Endothelial cell of umbilical vein (primary cell): ENCODE measurements at regions of chr1 and their contacts with region 1.

Region 1: GRCh38 chr1:94335950-94336349 is 82.2 kb upstream of the ABCD3 start:
- DNase-seq: peak; percentile 94
- H3K4me3 ChIP-seq: no peak overlapping the region
- H3K27ac ChIP-seq: no peak overlapping the region
- H3K4me1 ChIP-seq: peaks cover 5% of the 10 kb centered on the region
- H3K27me3 ChIP-seq: peaks cover 4 to 5% of the 10 kb centered on the region in 2 experiments
- CTCF ChIP-seq: peak; percentile 73 to 89
- POLR2A ChIP-seq: no peak

Region 2: DNA sequence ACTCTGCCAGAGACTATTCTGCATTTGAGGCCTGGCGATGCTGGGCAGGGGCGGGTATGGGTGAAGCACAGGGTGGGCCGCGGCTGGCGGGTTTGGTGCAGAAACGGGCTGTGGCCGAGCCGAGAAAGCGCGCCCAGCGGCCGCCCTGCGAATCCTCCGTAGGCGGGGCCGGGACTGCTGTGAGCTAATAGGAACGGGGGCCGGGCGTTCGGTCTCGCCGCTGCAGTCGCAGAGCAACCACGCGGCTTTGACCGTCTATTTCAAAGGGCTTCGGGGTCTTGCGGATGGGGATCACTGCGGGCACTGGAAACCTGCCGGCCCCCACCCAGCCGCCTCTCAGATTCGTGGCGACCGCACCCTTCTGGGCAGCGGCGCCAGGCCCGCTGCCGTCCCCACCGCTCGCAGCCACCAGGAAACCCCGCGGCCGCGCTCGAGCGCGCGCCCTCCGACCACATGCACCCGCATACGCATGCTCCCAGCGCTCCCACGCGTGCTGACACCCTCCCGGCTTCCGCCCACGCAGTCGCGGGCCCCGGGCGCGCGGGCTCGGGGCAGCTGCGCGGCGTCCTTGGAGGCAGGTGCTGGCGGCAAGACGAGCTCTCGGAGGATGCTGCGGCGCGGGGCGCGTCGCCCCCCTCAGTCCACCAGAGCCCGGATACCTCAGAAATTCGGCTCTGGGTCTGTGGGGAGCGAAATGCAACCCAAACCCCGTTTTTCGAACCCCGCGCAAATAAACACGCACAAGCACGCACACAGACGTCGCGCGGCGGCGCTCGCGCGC is 489.5 kb before region 1 on chr1:
- CTCF ChIA-PET with region 1: interaction called, 10 read pairs
- POLR2A ChIA-PET with region 1: no interaction called
- dilution Hi-C with region 1: no loop called
- intact Hi-C with region 1: loop called (anchors 5 kb)
- DNase-seq: peak; percentile 83
- H3K4me3 ChIP-seq: peak overlapping the region; percentile 65 to 90 (median 67)
- H3K27ac ChIP-seq: peak overlapping the region; percentile 99
- H3K4me1 ChIP-seq: peaks cover 25% of the 10 kb centered on the region
- H3K27me3 ChIP-seq: no peaks in the 10 kb centered on the region
- CTCF ChIP-seq: peak; percentile 27 to 53
- POLR2A ChIP-seq: peak; percentile 72

Region 3: GRCh38 chr1:94025383-94026340 is 310.3 kb before region 1 on chr1:
- CTCF ChIA-PET with region 1: interaction called, 1,439 read pairs
- POLR2A ChIA-PET with region 1: interaction called, 6 read pairs
- dilution Hi-C with region 1: no loop called
- intact Hi-C with region 1: loop called (anchors 1 kb)
- DNase-seq: peak; percentile 83
- H3K4me3 ChIP-seq: no peak overlapping the region
- H3K27ac ChIP-seq: no peak overlapping the region
- H3K4me1 ChIP-seq: peaks cover 25% of the 10 kb centered on the region
- H3K27me3 ChIP-seq: no peaks in the 10 kb centered on the region
- CTCF ChIP-seq: peak; percentile 53 to 73
- POLR2A ChIP-seq: no peak

Region 4: DNA sequence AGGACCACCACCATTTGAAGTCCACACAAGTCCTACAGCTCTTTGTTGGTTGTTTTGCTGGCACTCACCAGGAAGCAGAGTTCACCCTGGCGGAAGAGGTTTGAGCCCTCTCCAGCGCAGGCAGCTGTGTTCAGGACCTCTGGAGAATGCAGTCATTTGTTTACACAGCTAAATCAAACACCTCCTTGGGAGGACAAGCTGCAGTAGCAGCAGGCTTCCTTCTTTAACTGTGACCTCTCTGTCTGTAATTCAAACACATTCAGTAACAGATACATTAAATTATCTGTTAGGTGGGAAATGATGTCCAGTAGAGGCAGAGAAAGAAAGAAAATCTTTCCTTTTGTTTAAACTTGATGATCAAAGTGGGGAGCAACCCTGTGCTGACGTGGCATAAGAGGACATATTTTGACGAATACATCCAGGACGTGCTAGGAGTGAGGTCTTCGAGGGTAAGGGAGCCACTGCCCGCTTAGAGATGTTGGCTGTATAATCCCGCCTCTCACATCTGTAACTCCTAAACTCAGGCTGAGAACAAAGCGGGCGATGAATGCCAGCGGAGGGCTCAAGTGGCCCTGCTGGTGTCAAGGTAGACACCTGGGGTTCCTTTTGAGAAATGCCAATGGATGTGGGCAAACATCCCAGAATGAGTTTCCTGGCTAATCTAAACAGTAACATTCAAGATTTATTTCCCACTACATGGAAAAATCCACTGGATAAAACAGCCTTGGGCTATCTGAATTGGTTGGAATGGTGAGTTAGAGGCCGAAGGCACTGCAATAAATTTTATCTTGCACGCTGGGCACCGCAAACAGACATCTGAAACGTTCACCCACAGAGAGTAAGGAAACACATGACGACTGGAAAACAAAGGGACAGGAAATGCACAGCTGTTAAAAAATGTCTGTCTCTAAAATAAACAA is 266.7 kb before region 1 on chr1:
- CTCF ChIA-PET with region 1: interaction called, 252 read pairs
- POLR2A ChIA-PET with region 1: no interaction called
- dilution Hi-C with region 1: no loop called
- intact Hi-C with region 1: no loop called
- DNase-seq: peak; percentile 98
- H3K4me3 ChIP-seq: no peak overlapping the region
- H3K27ac ChIP-seq: peak overlapping the region; percentile 100
- H3K4me1 ChIP-seq: peaks cover 77% of the 10 kb centered on the region
- H3K27me3 ChIP-seq: no peaks in the 10 kb centered on the region
- CTCF ChIP-seq: no peak
- POLR2A ChIP-seq: no peak

Region 5: DNA sequence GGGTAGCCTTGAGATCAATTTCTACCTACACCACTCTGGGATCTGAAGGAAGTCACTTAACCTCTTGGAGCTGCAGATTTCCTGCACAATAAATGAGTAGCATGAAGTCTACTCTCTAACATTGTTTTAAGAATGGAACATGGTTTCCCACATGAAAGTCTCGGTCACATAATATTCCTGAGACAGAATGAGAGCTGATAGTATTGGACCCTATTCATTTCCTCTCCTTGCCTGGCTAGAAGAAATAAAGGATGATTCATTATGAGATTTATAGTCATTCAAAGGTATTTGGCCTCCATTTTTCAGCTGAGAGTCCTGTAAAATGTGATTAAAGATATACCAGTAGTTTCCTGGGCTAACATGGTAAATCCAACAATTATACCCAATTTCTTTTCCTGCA is 155.3 kb before region 1 on chr1:
- CTCF ChIA-PET with region 1: interaction called, 41 read pairs
- POLR2A ChIA-PET with region 1: interaction called, 3 read pairs
- dilution Hi-C with region 1: no loop called
- intact Hi-C with region 1: loop called (anchors 5 kb)
- DNase-seq: peak; percentile 49
- H3K4me3 ChIP-seq: no peak overlapping the region
- H3K27ac ChIP-seq: peak overlapping the region; percentile 18
- H3K4me1 ChIP-seq: peaks cover 36% of the 10 kb centered on the region
- H3K27me3 ChIP-seq: no peaks in the 10 kb centered on the region
- CTCF ChIP-seq: no peak
- POLR2A ChIP-seq: no peak

Region 6: GRCh38 chr1:94228640-94229375 is 107.1 kb before region 1 on chr1:
- CTCF ChIA-PET with region 1: interaction called, 91 read pairs
- POLR2A ChIA-PET with region 1: interaction called, 9 read pairs
- dilution Hi-C with region 1: no loop called
- intact Hi-C with region 1: no loop called
- DNase-seq: no peak
- H3K4me3 ChIP-seq: peak overlapping the region in 1 of 3 experiments; percentile 12
- H3K27ac ChIP-seq: no peak overlapping the region
- H3K4me1 ChIP-seq: peaks cover 71% of the 10 kb centered on the region
- H3K27me3 ChIP-seq: no peaks in the 10 kb centered on the region
- CTCF ChIP-seq: no peak
- POLR2A ChIP-seq: no peak

Region 7: GRCh38 chr1:94522304-94522703 is 186.4 kb after region 1 on chr1:
- CTCF ChIA-PET with region 1: no interaction called
- POLR2A ChIA-PET with region 1: no interaction called
- dilution Hi-C with region 1: no loop called
- intact Hi-C with region 1: no loop called
- DNase-seq: peak; percentile 52
- H3K4me3 ChIP-seq: no peak overlapping the region
- H3K27ac ChIP-seq: no peak overlapping the region
- H3K4me1 ChIP-seq: no peaks in the 10 kb centered on the region
- H3K27me3 ChIP-seq: no peaks in the 10 kb centered on the region
- CTCF ChIP-seq: peak in 1 of 2 donors; percentile 28
- POLR2A ChIP-seq: no peak

Region 8: DNA sequence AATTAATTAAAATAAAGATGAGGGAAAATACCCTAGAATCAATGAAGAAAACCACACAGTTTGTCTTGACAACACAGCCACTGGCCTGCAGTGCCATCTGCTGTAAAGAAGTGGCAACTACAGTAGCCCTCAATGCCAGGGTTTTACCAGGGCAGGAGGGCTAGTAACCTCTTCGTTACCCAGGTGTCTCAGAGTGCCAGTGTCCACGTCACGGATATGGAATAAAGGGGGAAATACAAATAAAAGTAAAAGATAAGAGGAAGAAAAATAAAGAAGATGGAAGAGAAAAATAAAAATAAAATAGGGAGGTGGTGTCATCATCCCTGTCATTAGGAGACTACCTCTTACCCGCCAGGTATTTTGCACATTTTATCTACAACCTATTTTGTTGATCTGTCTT is 470.0 kb after region 1 on chr1:
- CTCF ChIA-PET with region 1: interaction called, 12 read pairs
- POLR2A ChIA-PET with region 1: no interaction called
- dilution Hi-C with region 1: no loop called
- intact Hi-C with region 1: loop called (anchors 1 kb)
- DNase-seq: peak; percentile 58
- H3K4me3 ChIP-seq: peak overlapping the region in 1 of 3 experiments; percentile 38
- H3K27ac ChIP-seq: no peak overlapping the region
- H3K4me1 ChIP-seq: peaks cover 30% of the 10 kb centered on the region
- H3K27me3 ChIP-seq: peaks cover under 1 to 6% of the 10 kb centered on the region in 2 experiments
- CTCF ChIP-seq: peak; percentile 82 to 87
- POLR2A ChIP-seq: no peak